Caco-2 (cell line): ENCODE measurements at regions of chr4 and their contacts with region 1.

Region 1: GRCh38 chr4:96459105-96459504 is 619.2 kb downstream of the PDHA2 start:
- DNase-seq: no peak
- H3K4me3 ChIP-seq: no peak overlapping the region
- H3K4me3 Mint-ChIP-seq: no peak overlapping the region
- H3K27ac Mint-ChIP-seq: no peak overlapping the region
- H3K4me1 ChIP-seq: no peaks in the 10 kb centered on the region
- H3K4me1 Mint-ChIP-seq: no peaks in the 10 kb centered on the region
- H3K27me3 ChIP-seq: no peaks in the 10 kb centered on the region
- H3K27me3 Mint-ChIP-seq: no peaks in the 10 kb centered on the region
- CTCF ChIP-seq: no peak

Region 2: GRCh38 chr4:96102541-96103026 is 356.5 kb before region 1 on chr4:
- CTCF ChIA-PET with region 1: no interaction called
- POLR2A ChIA-PET with region 1: no interaction called
- intact Hi-C with region 1: no loop called
- DNase-seq: no peak
- H3K4me3 ChIP-seq: no peak overlapping the region
- H3K4me3 Mint-ChIP-seq: no peak overlapping the region
- H3K27ac Mint-ChIP-seq: no peak overlapping the region
- H3K4me1 ChIP-seq: no peaks in the 10 kb centered on the region
- H3K4me1 Mint-ChIP-seq: no peaks in the 10 kb centered on the region
- H3K27me3 ChIP-seq: no peaks in the 10 kb centered on the region
- H3K27me3 Mint-ChIP-seq: peaks cover 3% of the 10 kb centered on the region
- CTCF ChIP-seq: no peak

Region 3: DNA sequence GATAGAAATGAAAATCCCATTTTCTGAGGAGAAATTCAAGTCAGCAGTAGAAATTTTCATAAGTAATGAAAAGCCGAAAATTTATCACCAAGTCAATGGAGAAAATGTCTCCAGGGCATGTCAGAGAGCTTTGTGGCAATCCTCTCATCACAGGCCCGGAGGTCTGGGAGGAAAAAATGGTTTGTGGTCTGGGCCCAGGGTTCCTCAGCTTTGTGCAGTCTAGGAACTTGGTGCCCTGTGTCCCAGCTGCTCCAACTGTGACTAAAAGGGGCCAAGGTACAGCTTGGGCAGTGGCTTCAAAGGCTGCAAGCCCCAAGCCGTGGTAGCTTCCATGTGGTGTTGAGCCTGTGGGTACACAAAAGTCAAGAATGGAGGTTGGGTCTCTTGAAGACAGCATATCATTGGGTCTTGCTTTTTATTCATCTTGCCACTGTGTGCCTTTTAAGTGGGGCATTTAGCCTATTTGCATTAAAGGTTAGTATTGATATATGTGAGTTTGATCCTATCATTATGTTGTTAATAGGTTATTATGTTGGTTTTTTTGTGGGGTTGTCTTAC is 10.7 kb before region 1 on chr4:
- CTCF ChIA-PET with region 1: no interaction called
- POLR2A ChIA-PET with region 1: no interaction called
- intact Hi-C with region 1: loop called (anchors 2 kb)
- DNase-seq: no peak
- H3K4me3 ChIP-seq: no peak overlapping the region
- H3K4me3 Mint-ChIP-seq: no peak overlapping the region
- H3K27ac Mint-ChIP-seq: no peak overlapping the region
- H3K4me1 ChIP-seq: no peaks in the 10 kb centered on the region
- H3K4me1 Mint-ChIP-seq: no peaks in the 10 kb centered on the region
- H3K27me3 ChIP-seq: no peaks in the 10 kb centered on the region
- H3K27me3 Mint-ChIP-seq: no peaks in the 10 kb centered on the region
- CTCF ChIP-seq: no peak